Left cardiac atrium (tissue), 4 donors: ENCODE measurements at regions of chr11 and their contacts with region 1.

Region 1: GRCh38 chr11:73787643-73788537 is at the start of gene MRPL48:
- DNase-seq: peak; percentile 94
- ATAC-seq: peak; percentile 99
- total RNA-seq, gene MRPL48: 33.4 to 37.3 TPM

Region 2: GRCh38 chr11:73876424-73877300 is 88.8 kb after region 1 on chr11 and contains the starts of genes COA4 and PAAF1:
- intact Hi-C with region 1: loop called in 1 of 2 experiments (anchors 10 kb)
- DNase-seq: peak; percentile 95
- ATAC-seq: peak; percentile 99 to 100
- total RNA-seq, gene COA4: 60.3 to 65.3 TPM
- total RNA-seq, gene PAAF1: 15.4 to 19.9 TPM